ENCODE measurements at regions of chr12 and their contacts with region 1.

Region 1: GRCh38 chr12:11071414-11071813 is 9.3 kb upstream of the TAS2R46 start:
- DNase-seq: no peak
- ATAC-seq: no peak

Region 2: DNA sequence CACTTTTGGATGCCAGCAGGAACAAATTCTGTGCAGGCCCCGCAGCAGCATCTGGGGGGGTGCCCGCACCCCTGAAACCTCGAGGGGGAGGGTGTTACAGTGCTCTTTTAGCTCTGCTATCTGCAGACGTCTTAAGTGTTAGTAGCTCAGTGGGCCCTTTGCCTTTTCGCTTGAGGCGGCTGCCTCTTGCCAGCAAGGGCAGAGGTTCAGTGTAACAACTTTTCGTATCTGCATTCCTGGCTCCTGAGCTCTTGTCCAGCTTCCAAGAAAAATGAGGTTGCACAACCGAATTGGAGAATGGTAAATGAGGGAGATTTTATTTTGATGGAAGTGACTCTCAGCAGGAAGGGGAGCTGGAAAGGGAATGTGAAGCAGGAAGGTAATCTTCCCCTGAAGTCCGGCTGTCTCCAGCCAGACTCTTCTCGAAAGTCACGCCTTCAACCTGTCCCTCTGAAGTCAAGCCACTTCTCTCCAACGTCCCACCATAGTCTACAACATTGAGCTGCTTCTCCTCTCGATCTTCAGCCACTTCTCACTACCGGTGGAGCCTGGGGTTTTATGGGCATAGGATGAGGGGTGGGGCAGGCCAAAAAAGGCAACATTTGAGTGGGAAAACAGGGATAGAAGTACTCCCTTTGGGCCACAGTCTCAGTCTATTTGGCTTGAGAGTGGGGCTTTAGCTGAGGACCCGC is 102.5 kb before region 1 on chr12:
- intact Hi-C with region 1: no loop called
- DNase-seq: peak; percentile 45
- ATAC-seq: peak; percentile 94

Region 3: GRCh38 chr12:11015775-11016430 is 55.5 kb before region 1 on chr12:
- intact Hi-C with region 1: loop called (anchors 5 kb)
- DNase-seq: no peak
- ATAC-seq: peak; percentile 20

Region 4: GRCh38 chr12:11026121-11026520 is 45.3 kb before region 1 on chr12:
- intact Hi-C with region 1: no loop called
- DNase-seq: no peak
- ATAC-seq: no peak

Region 5: DNA sequence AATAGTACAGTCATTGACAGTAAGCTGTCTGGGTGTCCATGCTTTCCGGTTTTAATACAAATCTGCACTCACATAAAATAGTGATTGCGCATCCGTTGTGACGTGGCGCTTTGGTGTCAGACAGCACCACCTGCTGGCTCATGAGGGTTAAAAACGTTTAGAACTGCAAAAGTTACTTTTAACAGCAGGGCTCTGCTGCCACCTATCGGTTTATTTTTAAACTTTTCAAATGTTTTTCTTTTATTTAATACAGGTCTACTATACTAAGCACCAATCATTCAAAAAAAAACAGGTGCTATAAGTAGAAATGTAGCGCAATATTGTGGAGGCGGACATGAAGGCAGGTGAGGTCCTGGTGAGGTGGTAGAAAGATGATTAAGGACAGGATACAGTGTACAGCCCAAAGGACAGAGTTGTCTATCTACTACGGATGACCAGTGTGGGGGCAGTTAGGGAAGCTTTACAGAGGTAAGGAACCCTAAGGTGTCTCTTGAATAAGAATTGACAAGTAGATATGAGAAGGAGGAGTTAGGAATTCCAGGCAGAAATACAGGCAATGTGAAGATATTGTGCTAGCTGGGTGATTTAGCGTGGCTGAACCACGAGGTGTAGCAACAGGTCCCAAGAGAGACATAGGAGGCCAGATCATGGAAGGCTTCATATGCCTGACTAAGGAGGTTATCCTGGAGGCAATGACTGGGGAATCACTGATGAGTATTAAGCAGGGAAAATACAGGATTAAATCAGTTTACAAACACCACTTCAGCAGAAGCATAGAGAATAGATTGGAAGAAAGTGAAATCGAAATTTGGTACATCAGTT is 415.4 kb after region 1 on chr12:
- intact Hi-C with region 1: no loop called
- DNase-seq: peak; percentile 71
- ATAC-seq: peak; percentile 84

Measured in Right ventricle myocardium superior (tissue), 1 donor.